Kidney (tissue), 22 donors: ENCODE measurements at regions of chr3 and their contacts with region 1.

Region 1: DNA sequence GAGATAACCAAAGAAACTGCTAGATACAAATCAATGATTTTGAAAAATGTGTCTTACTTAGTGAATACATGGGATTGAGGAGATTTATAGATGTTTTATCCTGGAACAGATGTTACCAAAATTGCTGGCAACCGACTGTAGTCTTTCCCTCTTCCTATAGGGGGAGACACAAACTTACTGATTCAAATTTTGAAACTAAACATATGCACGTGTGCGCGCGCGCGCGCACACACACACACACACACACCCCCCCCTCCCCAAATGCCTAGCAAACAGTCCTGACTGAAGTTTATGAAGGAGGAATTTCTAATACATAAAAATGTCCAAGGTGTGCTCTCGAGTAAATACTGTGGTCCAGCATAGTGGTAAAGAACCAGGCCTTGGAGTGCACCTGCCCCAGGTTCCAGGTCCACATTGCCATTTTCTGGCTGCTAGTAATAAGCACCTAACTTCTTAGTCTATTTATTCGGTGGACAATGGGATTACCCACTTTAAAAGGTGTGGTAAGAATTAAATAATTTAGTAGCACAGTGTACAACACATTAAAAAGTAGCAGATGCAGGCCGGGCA is 18.5 kb upstream of the C3orf62 start:
- DNase-seq: peak in 3 of 5 donors; percentile 7 to 31 (median 12)
- H3K4me3 ChIP-seq: no peak overlapping the region
- H3K27ac ChIP-seq: no peak overlapping the region
- H3K4me1 ChIP-seq: peaks cover 0 to 5% (median 0%) of the 10 kb centered on the region in 3 donors
- H3K27me3 ChIP-seq: no peaks in the 10 kb centered on the region
- CTCF ChIP-seq: peak; percentile 51

Region 2: GRCh38 chr3:49093853-49094767 is 201.5 kb before region 1 on chr3 and contains the start of gene QRICH1:
- intact Hi-C with region 1: no loop called
- DNase-seq: peak; percentile 98 to 100 (median 99)
- H3K4me3 ChIP-seq: peak within 1 kb of the TSS; percentile 78 to 98 (median 93)
- H3K27ac ChIP-seq: peak within 1 kb of the TSS; percentile 91 to 93
- H3K4me1 ChIP-seq: peaks cover 0 to 15% (median 11%) of the 10 kb centered on the region in 3 donors
- H3K27me3 ChIP-seq: no peaks in the 10 kb centered on the region
- CTCF ChIP-seq: peak; percentile 51
- total RNA-seq, gene QRICH1: 92.1 TPM

Region 3: DNA sequence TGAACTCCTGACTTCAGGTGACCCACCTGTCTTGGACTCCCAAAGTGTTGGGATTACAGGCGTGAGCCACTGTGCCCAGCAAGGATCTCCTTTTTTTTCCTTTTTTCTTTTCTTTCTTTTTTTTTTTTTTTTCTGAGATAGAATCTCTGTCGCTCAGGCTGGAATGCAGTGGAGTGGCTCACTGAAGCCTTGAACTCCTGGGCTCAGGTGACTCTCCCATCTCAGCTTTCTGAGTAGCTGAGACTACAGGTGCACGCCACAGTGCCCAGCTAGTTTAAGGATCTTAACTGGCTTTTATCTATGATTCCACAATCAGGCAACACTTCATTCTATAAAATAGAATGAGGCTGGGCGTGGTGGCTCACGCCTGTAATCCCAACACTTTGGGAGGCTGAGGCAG is 149.8 kb after region 1 on chr3:
- intact Hi-C with region 1: loop called (anchors 10 kb)
- DNase-seq: no peak
- H3K4me3 ChIP-seq: no peak overlapping the region
- H3K27ac ChIP-seq: no peak overlapping the region
- H3K4me1 ChIP-seq: peaks cover 0 to 4% (median 0%) of the 10 kb centered on the region in 3 donors
- H3K27me3 ChIP-seq: no peaks in the 10 kb centered on the region
- CTCF ChIP-seq: no peak